ENCODE measurements at regions of chr12 and their contacts with region 1.

Region 1: DNA sequence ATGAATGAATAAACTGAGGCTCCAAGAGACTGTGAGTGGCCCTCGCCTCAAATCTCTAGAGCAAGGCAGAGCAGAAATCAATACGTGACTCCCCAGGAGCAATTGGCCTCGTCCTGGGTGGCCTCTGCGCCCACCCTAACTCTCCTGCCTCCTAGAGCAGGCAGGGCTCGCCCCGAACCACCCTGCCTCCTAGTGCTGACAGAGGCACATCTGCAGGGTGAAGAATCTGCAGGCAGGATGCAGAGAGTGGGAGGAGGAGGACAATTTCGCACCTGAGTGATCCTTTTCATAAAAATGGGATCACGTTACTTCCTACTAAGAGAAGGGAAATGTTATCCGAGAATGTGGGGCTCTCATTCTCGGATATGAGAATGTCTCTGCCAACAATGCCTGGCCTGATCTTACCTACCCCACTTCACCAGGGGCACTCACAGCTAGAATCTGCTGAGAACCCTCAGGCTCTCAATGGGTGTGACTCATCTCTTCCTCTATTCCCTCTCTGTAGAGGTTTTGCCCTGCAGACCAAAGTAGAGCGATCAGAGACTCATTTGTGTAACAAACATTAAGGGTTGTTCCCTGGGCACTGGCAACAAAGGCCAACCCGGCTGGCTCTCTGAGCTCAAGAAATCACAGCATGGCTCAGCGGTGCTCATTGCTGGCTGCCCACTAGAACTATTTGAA is 61.7 kb upstream of the BCL2L14 start:
- DNase-seq: peak; percentile 87
- H3K4me3 Mint-ChIP-seq: peak overlapping the region; percentile 25
- H3K27ac Mint-ChIP-seq: peak overlapping the region; percentile 99
- H3K4me1 Mint-ChIP-seq: peaks cover 74% of the 10 kb centered on the region
- H3K27me3 Mint-ChIP-seq: no peaks in the 10 kb centered on the region

Region 2: DNA sequence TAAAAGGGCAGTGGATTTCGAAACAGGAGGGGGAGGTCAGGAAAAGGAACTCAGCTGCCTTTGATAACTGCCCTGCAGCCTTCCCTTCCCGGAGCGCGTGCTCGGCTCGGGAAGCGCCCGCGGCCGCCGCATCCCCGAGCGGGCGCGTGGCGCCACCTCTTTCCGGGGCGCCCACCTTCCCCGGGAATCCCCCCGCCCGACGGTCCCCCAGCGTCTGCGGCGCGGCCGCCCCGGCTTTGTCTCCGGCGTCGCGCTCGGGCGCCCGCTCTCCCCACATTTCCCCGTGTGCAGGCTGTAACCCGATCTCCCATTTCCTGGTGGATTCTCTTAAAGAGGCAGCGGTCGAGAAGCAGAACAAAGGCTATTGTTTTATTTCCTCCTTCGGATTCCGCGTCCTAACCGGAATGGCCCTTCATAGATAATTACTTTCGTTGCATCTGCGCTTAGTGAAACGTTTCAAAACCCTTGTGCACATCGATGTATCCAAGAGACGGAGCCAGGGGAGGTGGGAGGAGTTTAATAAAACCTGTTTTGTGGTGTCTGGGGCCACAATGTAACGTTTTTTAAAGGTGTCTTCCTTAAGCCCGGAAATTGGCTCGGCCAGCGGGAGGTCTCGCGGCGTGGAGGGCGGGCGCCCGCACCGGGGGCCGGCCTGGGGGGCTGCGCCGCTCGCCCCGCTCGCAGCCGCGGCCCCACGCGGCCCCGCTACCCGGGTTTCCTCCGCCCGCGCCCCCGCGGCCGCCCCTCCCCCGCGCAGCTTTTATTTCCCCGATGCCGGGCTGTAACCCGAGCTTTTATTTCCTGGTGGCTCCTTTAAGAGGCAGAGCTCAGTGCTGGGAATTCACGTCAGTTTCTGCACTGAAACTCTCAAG is 360.0 kb before region 1 on chr12 and contains the start of gene ETV6:
- CTCF ChIA-PET with region 1: interaction called, 4 read pairs
- intact Hi-C with region 1: loop called (anchors 1 kb)
- DNase-seq: peak; percentile 90
- H3K4me3 Mint-ChIP-seq: peak within 1 kb of the TSS; percentile 98
- H3K27ac Mint-ChIP-seq: peak within 1 kb of the TSS; percentile 99
- H3K4me1 Mint-ChIP-seq: peaks cover 27% of the 10 kb centered on the region
- H3K27me3 Mint-ChIP-seq: no peaks in the 10 kb centered on the region
- total RNA-seq, gene ETV6: 48.1 to 48.6 TPM

Region 3: DNA sequence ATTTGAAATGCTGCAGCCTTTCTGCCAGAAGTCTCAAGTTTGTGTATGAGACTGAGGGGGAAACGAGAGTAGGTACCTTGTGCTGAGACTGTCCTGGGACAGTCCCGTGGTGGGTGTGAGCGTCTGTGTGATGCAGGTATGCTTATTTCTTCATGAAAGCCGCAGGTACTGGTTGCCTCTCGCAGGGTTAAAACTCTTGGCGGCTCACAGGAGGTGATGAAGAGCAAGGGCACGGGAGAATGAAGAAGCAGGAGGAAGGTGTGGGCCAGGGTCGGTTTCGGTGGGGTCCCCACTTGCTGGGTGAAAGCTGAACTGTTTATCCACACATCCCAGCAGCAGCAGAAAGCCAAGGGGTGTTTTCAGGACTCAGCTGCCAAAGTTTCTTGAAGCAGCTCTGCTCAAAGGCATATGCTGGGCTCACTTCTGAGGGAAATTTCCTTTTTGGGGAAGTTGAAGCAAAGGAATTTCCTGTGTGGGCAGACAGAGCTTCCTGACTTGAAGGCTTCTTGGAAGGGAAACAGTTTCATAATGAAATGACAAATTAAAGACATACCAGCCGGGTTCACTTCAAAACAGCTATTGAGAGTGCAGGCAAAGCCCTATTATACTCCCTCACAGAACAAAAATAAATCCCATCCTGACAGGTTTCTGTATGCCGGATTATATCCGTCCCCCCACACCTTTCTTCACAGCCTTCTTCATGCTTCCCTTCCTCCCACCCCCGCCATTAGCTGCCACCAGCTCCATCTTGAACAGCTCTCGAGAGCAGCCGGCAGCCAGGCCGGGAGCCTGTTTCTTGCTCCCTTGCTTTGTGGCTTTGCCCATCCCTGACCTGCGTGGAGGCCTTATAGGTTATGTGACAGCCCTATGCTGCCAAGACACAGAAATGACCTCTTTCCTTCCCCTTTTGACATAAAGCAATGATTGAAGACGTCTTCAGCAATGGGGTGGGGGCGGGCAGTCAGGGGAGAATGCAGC is 243.0 kb before region 1 on chr12:
- CTCF ChIA-PET with region 1: interaction called, 5 read pairs
- intact Hi-C with region 1: loop called (anchors 1 kb)
- DNase-seq: peak; percentile 92
- H3K4me3 Mint-ChIP-seq: peak overlapping the region; percentile 43
- H3K27ac Mint-ChIP-seq: peak overlapping the region; percentile 92
- H3K4me1 Mint-ChIP-seq: peaks cover 99% of the 10 kb centered on the region
- H3K27me3 Mint-ChIP-seq: no peaks in the 10 kb centered on the region

Region 4: GRCh38 chr12:11822081-11822834 is 186.8 kb before region 1 on chr12:
- CTCF ChIA-PET with region 1: interaction called, 3 read pairs
- intact Hi-C with region 1: loop called (anchors 1 kb)
- DNase-seq: peak; percentile 83
- H3K4me3 Mint-ChIP-seq: peak overlapping the region; percentile 44
- H3K27ac Mint-ChIP-seq: peak overlapping the region; percentile 91
- H3K4me1 Mint-ChIP-seq: peaks cover 61% of the 10 kb centered on the region
- H3K27me3 Mint-ChIP-seq: no peaks in the 10 kb centered on the region

Region 5: DNA sequence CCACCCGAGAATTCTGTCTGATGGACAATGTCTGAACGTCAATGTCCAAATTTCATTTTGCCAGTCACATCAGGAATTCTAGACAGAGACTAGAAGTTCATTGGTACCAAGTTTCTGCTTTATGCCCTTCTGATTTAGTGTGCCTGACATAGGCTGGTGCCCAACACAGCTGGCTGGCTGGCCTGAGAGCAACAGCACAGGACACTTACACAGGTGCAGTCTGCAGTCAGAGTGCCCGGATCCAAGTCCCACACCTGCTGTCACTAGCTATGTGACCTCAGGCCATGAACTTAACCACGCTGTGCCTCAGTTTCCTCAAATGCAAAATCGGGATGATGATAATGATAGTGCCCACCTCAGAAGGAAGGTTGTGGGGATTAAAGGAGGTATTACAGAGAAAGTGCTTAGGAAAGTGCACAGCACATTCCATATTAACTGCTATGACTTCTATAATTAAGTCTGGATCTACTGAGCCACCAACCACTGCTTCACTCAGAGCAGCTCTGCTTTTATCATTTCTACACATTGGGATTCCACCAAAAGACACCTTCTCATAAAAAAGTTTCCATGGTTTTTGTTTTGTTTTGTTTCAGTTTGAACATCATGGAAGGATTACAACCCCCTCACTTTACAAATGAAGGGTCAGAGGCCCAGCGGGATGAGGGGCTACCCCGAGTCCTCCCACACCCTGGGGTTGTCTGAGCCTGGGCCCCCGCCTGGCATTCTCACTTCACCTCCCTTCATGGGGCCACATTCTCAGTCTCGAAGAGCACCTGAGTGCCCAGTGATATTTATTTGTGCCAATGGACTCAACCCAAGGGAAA is 107.2 kb before region 1 on chr12:
- CTCF ChIA-PET with region 1: interaction called, 10 read pairs
- intact Hi-C with region 1: loop called (anchors 1 kb)
- DNase-seq: peak; percentile 56
- H3K4me3 Mint-ChIP-seq: peak overlapping the region; percentile 54
- H3K27ac Mint-ChIP-seq: peak overlapping the region; percentile 79
- H3K4me1 Mint-ChIP-seq: peaks cover 35% of the 10 kb centered on the region
- H3K27me3 Mint-ChIP-seq: no peaks in the 10 kb centered on the region

Region 6: GRCh38 chr12:12024911-12025682 is 16.0 kb after region 1 on chr12:
- CTCF ChIA-PET with region 1: interaction called, 60 read pairs
- intact Hi-C with region 1: loop called (anchors 1 kb)
- DNase-seq: peak; percentile 79
- H3K4me3 Mint-ChIP-seq: peak overlapping the region; percentile 36
- H3K27ac Mint-ChIP-seq: peak overlapping the region; percentile 72
- H3K4me1 Mint-ChIP-seq: peaks cover 66% of the 10 kb centered on the region
- H3K27me3 Mint-ChIP-seq: no peaks in the 10 kb centered on the region

Region 7: DNA sequence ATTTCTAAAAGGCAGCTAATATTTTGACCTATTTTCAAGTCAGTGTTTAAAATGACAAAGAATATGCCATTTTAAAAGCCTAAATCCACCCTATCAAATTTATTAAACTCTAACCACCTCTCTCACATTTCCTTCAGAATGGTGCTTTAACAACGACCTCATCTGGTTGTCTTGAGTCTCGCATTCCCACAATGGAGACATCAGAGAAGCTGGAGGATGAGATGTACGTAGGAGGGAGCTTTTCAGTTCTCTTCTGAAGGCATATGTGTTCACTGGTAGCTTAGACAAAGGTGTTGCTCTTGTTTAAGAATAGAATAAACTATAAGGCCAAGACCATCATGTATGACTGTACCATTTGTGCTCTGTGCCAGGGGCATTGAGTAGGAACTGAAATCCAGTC is 144.5 kb after region 1 on chr12:
- CTCF ChIA-PET with region 1: no interaction called
- intact Hi-C with region 1: no loop called
- DNase-seq: no peak
- H3K4me3 Mint-ChIP-seq: no peak overlapping the region
- H3K27ac Mint-ChIP-seq: no peak overlapping the region
- H3K4me1 Mint-ChIP-seq: no peaks in the 10 kb centered on the region
- H3K27me3 Mint-ChIP-seq: no peaks in the 10 kb centered on the region

Region 8: GRCh38 chr12:12724661-12725545 is 715.8 kb after region 1 on chr12:
- CTCF ChIA-PET with region 1: no interaction called
- intact Hi-C with region 1: loop called (anchors 1 kb)
- DNase-seq: peak; percentile 94
- H3K4me3 Mint-ChIP-seq: peak overlapping the region; percentile 85
- H3K27ac Mint-ChIP-seq: peak overlapping the region; percentile 98
- H3K4me1 Mint-ChIP-seq: peaks cover 51% of the 10 kb centered on the region
- H3K27me3 Mint-ChIP-seq: no peaks in the 10 kb centered on the region